CD8-positive, alpha-beta memory T cell (primary cell): ENCODE measurements at regions of chr14 and their contacts with region 1.

Region 1: GRCh38 chr14:20413045-20413799 is at the start of gene TEP1:
- DNase-seq: peak; percentile 67 to 80 (median 69)
- H3K4me3 ChIP-seq: peak within 1 kb of the TSS; percentile 91
- H3K4me3 Mint-ChIP-seq: peak within 1 kb of the TSS; percentile 92 to 99 (median 96)
- H3K27ac ChIP-seq: peak within 1 kb of the TSS; percentile 90
- H3K27ac Mint-ChIP-seq: peak within 1 kb of the TSS; percentile 92 to 100 (median 98)
- H3K4me1 ChIP-seq: peaks cover 23% of the 10 kb centered on the region
- H3K4me1 Mint-ChIP-seq: peaks cover 39 to 57% (median 57%) of the 10 kb centered on the region in 3 donors
- H3K27me3 ChIP-seq: no peaks in the 10 kb centered on the region
- H3K27me3 Mint-ChIP-seq: no peaks in the 10 kb centered on the region
- total RNA-seq, gene TEP1: 31.7 to 33.0 TPM

Region 2: DNA sequence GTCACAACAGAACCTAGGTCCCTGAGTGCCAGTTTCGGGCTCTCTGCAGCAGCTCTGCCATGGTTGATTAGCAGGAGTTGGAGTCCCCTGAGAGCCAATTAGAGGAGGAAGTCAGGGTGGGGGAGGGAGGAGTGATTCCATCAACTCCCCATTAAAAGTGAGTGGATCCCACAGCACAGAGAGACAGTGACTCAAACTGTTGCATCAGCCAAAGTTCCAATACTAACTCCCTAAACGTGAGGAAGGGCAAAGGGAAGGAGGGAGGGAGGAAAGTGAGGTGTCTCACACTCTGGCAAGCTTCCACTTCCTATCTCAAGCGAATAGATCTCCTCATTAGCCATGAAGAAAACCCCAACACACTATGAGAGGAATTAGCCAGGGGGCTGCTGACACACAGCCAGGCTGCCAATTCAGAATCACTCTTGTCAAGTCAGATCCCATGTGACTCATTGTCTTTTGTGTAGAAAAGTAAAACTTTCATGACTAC is 150.5 kb before region 1 on chr14:
- CTCF ChIA-PET with region 1: no interaction called
- POLR2A ChIA-PET with region 1: no interaction called
- DNase-seq: no peak
- H3K4me3 ChIP-seq: no peak overlapping the region
- H3K4me3 Mint-ChIP-seq: no peak overlapping the region
- H3K27ac ChIP-seq: peak overlapping the region; percentile 8
- H3K27ac Mint-ChIP-seq: no peak overlapping the region
- H3K4me1 ChIP-seq: no peaks in the 10 kb centered on the region
- H3K4me1 Mint-ChIP-seq: no peaks in the 10 kb centered on the region
- H3K27me3 ChIP-seq: no peaks in the 10 kb centered on the region
- H3K27me3 Mint-ChIP-seq: no peaks in the 10 kb centered on the region

Region 3: DNA sequence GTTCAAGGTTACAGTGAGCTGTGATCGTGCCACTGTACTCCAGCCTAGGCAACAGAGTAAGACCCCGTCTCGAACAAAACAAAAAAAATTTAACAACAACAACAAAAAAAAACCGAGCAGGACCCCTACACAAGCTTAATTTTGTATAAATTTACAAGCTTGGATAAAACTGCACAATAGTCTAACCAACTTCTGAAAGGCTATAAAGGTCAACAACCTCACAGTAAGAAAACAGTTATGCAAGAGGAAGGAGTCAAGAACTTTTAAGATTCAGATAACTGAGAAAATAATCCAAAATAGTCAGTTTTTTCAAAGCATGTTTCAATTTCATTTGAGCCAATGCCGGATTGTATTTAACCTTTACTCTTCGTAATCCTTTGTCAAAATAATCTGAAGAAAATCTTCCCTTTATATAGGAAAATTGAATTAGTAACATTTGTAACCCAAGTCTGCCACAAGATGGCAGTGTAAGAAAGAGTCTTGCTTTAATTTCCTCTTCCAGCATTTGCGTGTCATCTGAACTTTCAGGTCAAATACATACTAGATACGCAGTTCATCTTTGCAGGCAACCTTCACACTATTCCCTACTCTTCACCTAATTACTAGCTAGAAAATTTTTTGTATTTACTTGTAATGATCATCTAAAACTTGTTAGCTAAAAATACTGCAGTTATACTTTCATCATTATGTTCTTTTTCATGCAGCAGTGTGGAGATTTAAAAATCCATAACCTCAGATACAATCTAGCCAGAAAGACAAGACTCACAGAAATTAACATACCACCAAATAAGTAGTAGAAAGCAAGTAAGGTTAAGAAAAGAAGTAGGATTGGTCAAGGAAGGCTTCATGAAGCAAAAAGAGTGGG is 86.0 kb before region 1 on chr14:
- CTCF ChIA-PET with region 1: interaction called, 23 read pairs
- POLR2A ChIA-PET with region 1: no interaction called
- DNase-seq: peak in 3 of 5 donors; percentile 6 to 67 (median 60)
- H3K4me3 ChIP-seq: no peak overlapping the region
- H3K4me3 Mint-ChIP-seq: peak overlapping the region in 2 of 7 donors; percentile 26 to 33
- H3K27ac ChIP-seq: no peak overlapping the region
- H3K27ac Mint-ChIP-seq: peak overlapping the region; percentile 16 to 92 (median 78)
- H3K4me1 ChIP-seq: peaks cover under 1% of the 10 kb centered on the region
- H3K4me1 Mint-ChIP-seq: peaks cover 22 to 39% (median 27%) of the 10 kb centered on the region in 3 donors
- H3K27me3 ChIP-seq: no peaks in the 10 kb centered on the region
- H3K27me3 Mint-ChIP-seq: no peaks in the 10 kb centered on the region

Region 4: DNA sequence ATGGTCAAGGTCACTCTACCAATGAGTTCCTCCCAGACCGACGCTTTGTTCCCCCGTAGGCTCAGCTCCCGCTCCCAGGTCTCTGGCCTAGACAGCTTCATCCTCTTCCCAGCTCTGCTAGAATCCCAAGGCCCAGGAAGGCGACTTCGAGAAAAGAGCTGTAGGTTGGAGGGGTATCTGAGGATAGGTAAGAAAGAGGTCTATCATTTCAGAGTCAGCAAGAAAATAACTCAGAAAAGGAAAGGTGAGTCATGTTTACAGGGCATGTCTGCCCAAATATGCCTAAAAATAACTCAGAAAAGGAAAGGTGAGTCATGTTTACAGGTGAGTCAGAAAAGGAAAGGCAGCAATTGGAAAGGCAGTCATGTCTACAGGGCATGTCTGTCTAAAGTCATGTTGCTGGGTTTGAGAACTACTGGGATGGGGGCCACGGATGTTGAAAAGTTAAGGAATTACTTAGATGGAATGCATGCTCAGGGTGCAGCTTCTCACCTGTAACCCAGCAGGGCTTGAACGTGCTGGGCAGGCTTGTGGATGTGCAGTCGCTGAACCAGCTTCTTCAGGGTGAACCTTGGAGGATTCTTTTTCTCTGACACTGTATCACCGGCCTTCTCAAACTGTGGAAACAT is 12.1 kb before region 1 on chr14:
- CTCF ChIA-PET with region 1: interaction called, 19 read pairs
- POLR2A ChIA-PET with region 1: no interaction called
- DNase-seq: no peak
- H3K4me3 ChIP-seq: no peak overlapping the region
- H3K4me3 Mint-ChIP-seq: no peak overlapping the region
- H3K27ac ChIP-seq: no peak overlapping the region
- H3K27ac Mint-ChIP-seq: peak overlapping the region in 6 of 8 donors; percentile 3 to 56 (median 32)
- H3K4me1 ChIP-seq: no peaks in the 10 kb centered on the region
- H3K4me1 Mint-ChIP-seq: peaks cover 20 to 26% (median 25%) of the 10 kb centered on the region in 3 donors
- H3K27me3 ChIP-seq: no peaks in the 10 kb centered on the region
- H3K27me3 Mint-ChIP-seq: no peaks in the 10 kb centered on the region

Region 5: GRCh38 chr14:20428010-20428365 is 14.8 kb after region 1 on chr14:
- CTCF ChIA-PET with region 1: interaction called, 13 read pairs
- POLR2A ChIA-PET with region 1: interaction called, 3 read pairs
- DNase-seq: no peak
- H3K4me3 ChIP-seq: no peak overlapping the region
- H3K4me3 Mint-ChIP-seq: peak overlapping the region in 4 of 7 donors; percentile 12 to 65 (median 40)
- H3K27ac ChIP-seq: no peak overlapping the region
- H3K27ac Mint-ChIP-seq: peak overlapping the region in 5 of 8 donors; percentile 49 to 89 (median 64)
- H3K4me1 ChIP-seq: peaks cover 21% of the 10 kb centered on the region
- H3K4me1 Mint-ChIP-seq: peaks cover 22 to 26% (median 22%) of the 10 kb centered on the region in 3 donors
- H3K27me3 ChIP-seq: no peaks in the 10 kb centered on the region
- H3K27me3 Mint-ChIP-seq: no peaks in the 10 kb centered on the region